Naive thymus-derived CD4-positive, alpha-beta T cell (primary cell): ENCODE measurements at regions of chr2 and their contacts with region 1.

Region 1: GRCh38 chr2:101205521-101205998 is 47.1 kb upstream of the CNOT11 start:
- DNase-seq: peak in 7 of 9 donors; percentile 44 to 72 (median 55)
- ATAC-seq: peak; percentile 94
- H3K4me3 ChIP-seq: no peak overlapping the region
- H3K4me3 Mint-ChIP-seq: peak overlapping the region; percentile 27 to 80 (median 66)
- H3K27ac ChIP-seq: peak overlapping the region; percentile 52
- H3K27ac Mint-ChIP-seq: peak overlapping the region; percentile 27 to 93 (median 87)
- H3K4me1 ChIP-seq: no peaks in the 10 kb centered on the region
- H3K4me1 Mint-ChIP-seq: peaks cover 4 to 14% (median 12%) of the 10 kb centered on the region in 7 donors
- H3K27me3 ChIP-seq: no peaks in the 10 kb centered on the region
- H3K27me3 Mint-ChIP-seq: peaks cover 0 to 5% (median 0%) of the 10 kb centered on the region in 5 donors

Region 2: DNA sequence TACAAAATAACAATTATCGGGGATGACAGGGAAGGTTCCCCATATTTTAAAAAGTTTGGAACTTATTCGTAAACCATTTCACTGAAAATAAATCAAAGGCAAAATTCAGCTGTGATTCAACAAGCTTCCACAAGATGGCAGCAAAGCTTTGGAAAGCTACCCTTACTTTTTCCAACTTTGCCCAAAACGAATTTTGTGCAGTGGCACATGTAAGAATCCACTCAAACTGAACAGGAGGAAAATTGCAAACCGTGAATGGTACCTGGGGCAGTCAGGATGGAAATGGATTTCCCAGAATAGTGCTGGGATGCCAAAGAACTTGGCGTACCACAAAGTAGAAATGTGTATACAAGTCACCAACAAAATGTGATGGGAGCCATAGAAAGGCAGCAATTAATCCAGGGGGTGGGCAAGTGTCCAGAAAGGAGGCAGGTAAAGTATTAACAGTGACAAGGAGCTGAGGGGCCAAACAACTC is 192.8 kb before region 1 on chr2:
- CTCF ChIA-PET with region 1: interaction called, 64 read pairs
- POLR2A ChIA-PET with region 1: interaction called, 4 read pairs
- intact Hi-C with region 1: loop called (anchors 1 kb)
- DNase-seq: peak in 7 of 9 donors; percentile 16 to 51 (median 38)
- ATAC-seq: no peak
- H3K4me3 ChIP-seq: no peak overlapping the region
- H3K4me3 Mint-ChIP-seq: no peak overlapping the region
- H3K27ac ChIP-seq: no peak overlapping the region
- H3K27ac Mint-ChIP-seq: no peak overlapping the region
- H3K4me1 ChIP-seq: no peaks in the 10 kb centered on the region
- H3K4me1 Mint-ChIP-seq: peaks cover 6 to 28% (median 12%) of the 10 kb centered on the region in 7 donors
- H3K27me3 ChIP-seq: no peaks in the 10 kb centered on the region
- H3K27me3 Mint-ChIP-seq: no peaks in the 10 kb centered on the region

Region 3: GRCh38 chr2:101036562-101037457 is 168.8 kb before region 1 on chr2:
- CTCF ChIA-PET with region 1: interaction called, 5 read pairs
- POLR2A ChIA-PET with region 1: no interaction called
- intact Hi-C with region 1: loop called in 1 of 2 experiments (anchors 1 kb)
- DNase-seq: no peak
- ATAC-seq: no peak
- H3K4me3 ChIP-seq: no peak overlapping the region
- H3K4me3 Mint-ChIP-seq: no peak overlapping the region
- H3K27ac ChIP-seq: no peak overlapping the region
- H3K27ac Mint-ChIP-seq: no peak overlapping the region
- H3K4me1 ChIP-seq: no peaks in the 10 kb centered on the region
- H3K4me1 Mint-ChIP-seq: peaks cover 0 to 6% (median 0%) of the 10 kb centered on the region in 7 donors
- H3K27me3 ChIP-seq: no peaks in the 10 kb centered on the region
- H3K27me3 Mint-ChIP-seq: peaks cover 0 to 4% (median 0%) of the 10 kb centered on the region in 5 donors

Region 4: GRCh38 chr2:101076581-101076980 is 129.0 kb before region 1 on chr2:
- CTCF ChIA-PET with region 1: no interaction called
- POLR2A ChIA-PET with region 1: no interaction called
- intact Hi-C with region 1: no loop called
- DNase-seq: no peak
- ATAC-seq: no peak
- H3K4me3 ChIP-seq: no peak overlapping the region
- H3K4me3 Mint-ChIP-seq: no peak overlapping the region
- H3K27ac ChIP-seq: no peak overlapping the region
- H3K27ac Mint-ChIP-seq: no peak overlapping the region
- H3K4me1 ChIP-seq: no peaks in the 10 kb centered on the region
- H3K4me1 Mint-ChIP-seq: no peaks in the 10 kb centered on the region
- H3K27me3 ChIP-seq: no peaks in the 10 kb centered on the region
- H3K27me3 Mint-ChIP-seq: peaks cover 0 to 2% (median 0%) of the 10 kb centered on the region in 5 donors

Region 5: GRCh38 chr2:101396316-101396717 is 190.8 kb after region 1 on chr2:
- CTCF ChIA-PET with region 1: no interaction called
- POLR2A ChIA-PET with region 1: no interaction called
- intact Hi-C with region 1: no loop called
- DNase-seq: no peak
- ATAC-seq: no peak
- H3K4me3 ChIP-seq: no peak overlapping the region
- H3K4me3 Mint-ChIP-seq: no peak overlapping the region
- H3K27ac ChIP-seq: no peak overlapping the region
- H3K27ac Mint-ChIP-seq: no peak overlapping the region
- H3K4me1 ChIP-seq: no peaks in the 10 kb centered on the region
- H3K4me1 Mint-ChIP-seq: peaks cover 0 to 5% (median 0%) of the 10 kb centered on the region in 7 donors
- H3K27me3 ChIP-seq: peaks cover 0 to 5% of the 10 kb centered on the region in 2 donors
- H3K27me3 Mint-ChIP-seq: peaks cover 19 to 26% (median 24%) of the 10 kb centered on the region in 5 donors